Mammary epithelial cell (primary cell): ENCODE measurements at regions of chr1 and their contacts with region 1.

Region 1: GRCh38 chr1:208510194-208510952 is 266.2 kb upstream of the PLXNA2 start:
- DNase-seq: peak; percentile 80
- H3K4me3 ChIP-seq: no peak overlapping the region
- H3K27ac ChIP-seq: no peak overlapping the region
- H3K4me1 ChIP-seq: peaks cover 19% of the 10 kb centered on the region
- H3K27me3 ChIP-seq: no peaks in the 10 kb centered on the region
- CTCF ChIP-seq: no peak

Region 2: GRCh38 chr1:208008534-208008933 is 501.8 kb before region 1 on chr1:
- CTCF ChIA-PET with region 1: no interaction called
- dilution Hi-C with region 1: no loop called
- in situ Hi-C with region 1: no loop called
- intact Hi-C with region 1: no loop called
- DNase-seq: no peak
- H3K4me3 ChIP-seq: no peak overlapping the region
- H3K27ac ChIP-seq: no peak overlapping the region
- H3K4me1 ChIP-seq: peaks cover 10% of the 10 kb centered on the region
- H3K27me3 ChIP-seq: no peaks in the 10 kb centered on the region
- CTCF ChIP-seq: no peak

Region 3: GRCh38 chr1:208336137-208336518 is 174.2 kb before region 1 on chr1:
- CTCF ChIA-PET with region 1: no interaction called
- dilution Hi-C with region 1: no loop called
- in situ Hi-C with region 1: no loop called
- intact Hi-C with region 1: no loop called
- DNase-seq: no peak
- H3K4me3 ChIP-seq: no peak overlapping the region
- H3K27ac ChIP-seq: no peak overlapping the region
- H3K4me1 ChIP-seq: no peaks in the 10 kb centered on the region
- H3K27me3 ChIP-seq: peaks cover 24% of the 10 kb centered on the region
- CTCF ChIP-seq: no peak

Region 4: GRCh38 chr1:209534496-209535250 is 1024.3 kb after region 1 on chr1:
- CTCF ChIA-PET with region 1: no interaction called
- dilution Hi-C with region 1: no loop called
- in situ Hi-C with region 1: no loop called
- intact Hi-C with region 1: loop called (anchors 5 kb)
- DNase-seq: no peak
- H3K4me3 ChIP-seq: no peak overlapping the region
- H3K27ac ChIP-seq: no peak overlapping the region
- H3K4me1 ChIP-seq: peaks cover 32% of the 10 kb centered on the region
- H3K27me3 ChIP-seq: no peaks in the 10 kb centered on the region
- CTCF ChIP-seq: no peak